ENCODE measurements at regions of chr6 and their contacts with region 1.

Region 1: DNA sequence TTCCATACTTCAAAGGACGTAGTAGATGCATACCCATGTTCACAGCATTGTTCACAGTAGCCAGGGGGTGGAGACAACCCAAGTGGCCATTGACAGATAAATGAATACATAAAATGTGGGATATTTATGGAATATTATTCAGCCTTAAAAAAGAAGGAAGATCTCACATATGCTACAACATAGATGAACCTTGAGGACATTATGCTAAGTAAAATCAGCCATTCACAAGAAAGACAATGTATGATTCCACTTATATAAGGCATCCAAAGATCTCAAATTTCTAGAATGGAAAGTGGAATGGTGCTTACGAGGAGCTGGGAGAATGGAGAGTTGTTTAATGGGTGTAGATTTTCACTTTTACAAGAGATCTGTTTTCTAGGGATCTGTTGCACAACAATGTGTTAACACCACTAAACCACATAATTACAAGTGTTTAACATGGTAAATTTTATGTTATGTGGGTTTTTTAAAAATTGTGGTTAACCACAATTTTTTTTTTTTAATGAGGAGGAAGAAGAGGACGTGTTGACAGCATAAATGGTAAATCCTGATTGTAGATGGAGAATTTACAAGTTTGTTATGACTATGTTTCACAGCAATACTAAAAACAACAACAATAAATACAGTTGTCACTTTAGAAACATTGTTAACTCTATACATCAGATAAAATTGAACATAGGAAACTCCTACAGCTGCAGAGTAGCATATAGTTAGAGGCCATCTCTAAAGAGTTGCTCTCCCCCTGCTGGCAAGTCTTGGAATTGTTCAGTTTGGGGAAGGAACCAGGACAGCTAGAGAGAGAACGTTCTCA is 41.6 kb downstream of the CCN2 start:
- DNase-seq: peak; percentile 55 to 82 (median 59)
- H3K4me3 ChIP-seq: no peak overlapping the region
- H3K27ac ChIP-seq: no peak overlapping the region
- H3K4me1 ChIP-seq: no peaks in the 10 kb centered on the region
- H3K27me3 ChIP-seq: no peaks in the 10 kb centered on the region
- CTCF ChIP-seq: peak; percentile 54 to 81 (median 61)
- EP300 ChIP-seq: no peak
- POLR2A ChIP-seq: no peak

Region 2: DNA sequence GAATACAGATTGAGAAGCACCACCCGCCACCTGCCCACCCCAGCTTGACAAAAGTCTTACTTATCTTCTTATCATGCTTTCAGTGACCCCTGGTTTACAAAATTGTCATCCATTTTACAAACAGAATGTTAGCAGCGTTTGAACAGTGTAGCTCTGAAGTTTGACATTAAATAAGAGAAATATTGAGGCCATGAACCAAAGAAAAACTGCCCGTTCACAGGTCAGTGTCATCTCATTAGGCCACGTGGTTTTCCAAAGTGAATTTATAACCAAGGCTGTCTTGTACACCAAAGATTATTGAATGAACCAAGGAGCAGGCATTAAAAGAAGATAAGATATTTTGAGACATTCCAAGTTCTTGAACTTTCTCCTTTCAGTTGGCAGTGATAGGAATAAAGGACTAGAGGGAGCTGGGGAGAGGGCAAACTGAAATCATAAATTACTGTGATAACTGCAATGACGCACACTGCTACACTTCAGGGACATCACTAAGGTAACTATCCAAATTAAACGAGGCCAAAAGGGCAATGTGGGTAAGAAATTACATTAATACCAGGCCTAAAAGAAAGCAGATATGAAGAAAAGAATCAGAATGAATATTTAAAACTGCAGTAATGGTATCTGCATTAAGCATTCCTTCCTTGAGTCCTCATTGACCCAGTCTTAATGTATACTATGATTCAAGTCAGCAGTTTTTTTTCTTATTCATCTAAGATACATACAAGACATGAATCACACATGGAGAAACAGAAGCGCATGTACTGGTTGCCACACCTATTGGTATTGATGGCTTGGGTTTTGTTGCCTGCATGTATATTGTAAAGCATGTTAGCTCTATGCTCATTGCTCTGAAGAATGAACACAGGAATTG is 496.4 kb before region 1 on chr6:
- intact Hi-C with region 1: no loop called
- DNase-seq: no peak
- H3K4me3 ChIP-seq: no peak overlapping the region
- H3K27ac ChIP-seq: no peak overlapping the region
- H3K4me1 ChIP-seq: no peaks in the 10 kb centered on the region
- H3K27me3 ChIP-seq: no peaks in the 10 kb centered on the region
- CTCF ChIP-seq: no peak
- EP300 ChIP-seq: no peak
- POLR2A ChIP-seq: no peak

Region 3: GRCh38 chr6:131640100-131640499 is 269.5 kb before region 1 on chr6:
- intact Hi-C with region 1: no loop called
- DNase-seq: no peak
- H3K4me3 ChIP-seq: no peak overlapping the region
- H3K27ac ChIP-seq: no peak overlapping the region
- H3K4me1 ChIP-seq: no peaks in the 10 kb centered on the region
- H3K27me3 ChIP-seq: no peaks in the 10 kb centered on the region
- CTCF ChIP-seq: no peak
- EP300 ChIP-seq: no peak
- POLR2A ChIP-seq: no peak

Region 4: GRCh38 chr6:131694831-131695426 is 214.7 kb before region 1 on chr6:
- intact Hi-C with region 1: loop called in 3 of 4 experiments (anchors 5 to 10 kb)
- DNase-seq: peak; percentile 25 to 44 (median 40)
- H3K4me3 ChIP-seq: no peak overlapping the region
- H3K27ac ChIP-seq: no peak overlapping the region
- H3K4me1 ChIP-seq: no peaks in the 10 kb centered on the region
- H3K27me3 ChIP-seq: no peaks in the 10 kb centered on the region
- CTCF ChIP-seq: peak; percentile 23 to 64 (median 61)
- EP300 ChIP-seq: no peak
- POLR2A ChIP-seq: no peak

Region 5: GRCh38 chr6:131787766-131788712 is 121.6 kb before region 1 on chr6:
- intact Hi-C with region 1: loop called in 1 of 4 experiments (anchors 10 kb)
- DNase-seq: no peak
- H3K4me3 ChIP-seq: no peak overlapping the region
- H3K27ac ChIP-seq: no peak overlapping the region
- H3K4me1 ChIP-seq: peaks cover 2% of the 10 kb centered on the region
- H3K27me3 ChIP-seq: no peaks in the 10 kb centered on the region
- CTCF ChIP-seq: no peak
- EP300 ChIP-seq: no peak
- POLR2A ChIP-seq: no peak

Region 6: DNA sequence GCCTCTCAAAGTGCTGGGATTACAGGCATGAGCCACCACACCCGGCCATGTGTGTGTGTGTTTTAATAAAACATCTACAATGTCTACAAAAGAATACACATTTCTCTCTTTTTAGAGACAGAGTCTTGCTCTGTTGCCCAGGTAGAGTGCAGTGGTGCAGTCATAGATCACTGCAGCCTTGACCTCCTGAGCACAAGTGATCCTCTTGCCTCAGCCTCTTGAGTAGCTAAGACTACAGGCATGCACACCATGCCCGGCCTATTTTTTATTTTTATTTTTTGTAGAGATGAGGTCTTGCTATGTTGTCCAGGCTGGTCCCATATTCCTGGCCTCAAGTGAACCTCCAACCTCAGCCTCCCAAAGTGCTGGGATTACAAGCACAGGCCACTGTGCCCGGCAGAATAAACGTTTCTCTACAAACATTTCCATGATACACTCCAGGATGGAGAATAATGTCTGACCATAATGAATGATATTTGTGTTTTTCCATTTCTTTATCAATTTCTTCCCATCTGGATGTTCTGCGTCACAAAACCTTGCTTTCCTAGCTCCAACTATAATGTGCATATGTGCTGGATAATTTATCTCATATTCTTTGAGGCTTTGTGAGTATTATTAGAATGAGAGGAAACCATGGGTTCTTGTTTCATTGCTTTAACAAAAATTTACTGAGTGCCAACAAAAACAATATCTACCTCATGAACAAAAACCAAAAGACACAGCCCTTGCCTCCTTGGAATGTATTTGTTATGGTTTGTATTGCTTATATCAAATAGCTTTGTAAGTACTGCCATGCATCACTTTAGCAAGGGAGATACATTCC is 70.1 kb after region 1 on chr6:
- intact Hi-C with region 1: no loop called
- DNase-seq: no peak
- H3K4me3 ChIP-seq: no peak overlapping the region
- H3K27ac ChIP-seq: no peak overlapping the region
- H3K4me1 ChIP-seq: peaks cover 13% of the 10 kb centered on the region
- H3K27me3 ChIP-seq: no peaks in the 10 kb centered on the region
- CTCF ChIP-seq: no peak
- EP300 ChIP-seq: no peak
- POLR2A ChIP-seq: no peak